Vagina (tissue), 2 donors: ENCODE measurements at regions of chr10 and their contacts with region 1.

Region 1: GRCh38 chr10:124827474-124827873 is 25.9 kb downstream of the ABRAXAS2 start:
- DNase-seq: no peak
- H3K4me3 ChIP-seq: no peak overlapping the region
- H3K27ac ChIP-seq: no peak overlapping the region
- H3K4me1 ChIP-seq: no peaks in the 10 kb centered on the region
- H3K27me3 ChIP-seq: no peaks in the 10 kb centered on the region
- CTCF ChIP-seq: peak in 1 of 3 experiments; percentile 21
- POLR2A ChIP-seq: no peak

Region 2: DNA sequence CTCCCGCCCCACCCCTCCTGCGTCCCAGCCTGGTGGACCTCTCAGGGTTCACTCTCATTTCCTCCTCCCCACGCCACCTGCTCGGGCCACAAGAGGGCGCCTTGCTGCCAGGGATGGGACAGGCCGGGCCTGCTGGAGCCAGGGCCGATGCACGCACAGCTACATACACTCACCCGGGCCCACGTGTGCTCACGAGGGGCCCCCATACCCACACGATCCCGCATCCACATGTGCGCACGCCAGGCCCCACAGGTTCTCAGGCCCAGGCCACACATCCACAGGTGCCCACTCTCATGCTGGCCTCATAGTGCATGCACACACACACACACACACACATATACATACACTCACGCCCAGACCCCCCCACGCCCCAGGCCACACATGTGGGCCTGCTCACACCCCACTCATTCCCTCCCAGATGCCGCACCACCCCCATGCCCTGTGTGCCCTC is 297.2 kb before region 1 on chr10:
- intact Hi-C with region 1: loop called (anchors 10 kb)
- DNase-seq: no peak
- H3K4me3 ChIP-seq: no peak overlapping the region
- H3K27ac ChIP-seq: no peak overlapping the region
- H3K4me1 ChIP-seq: peaks cover 19% of the 10 kb centered on the region
- H3K27me3 ChIP-seq: no peaks in the 10 kb centered on the region
- CTCF ChIP-seq: peak; percentile 43 to 91 (median 82)
- POLR2A ChIP-seq: no peak